Naive thymus-derived CD4-positive, alpha-beta T cell (primary cell): ENCODE measurements at regions of chr10 and their contacts with region 1.

Region 1: GRCh38 chr10:43420369-43421200 is 11.6 kb upstream of the HNRNPF start:
- DNase-seq: peak; percentile 69 to 86 (median 81)
- ATAC-seq: peak; percentile 94
- H3K4me3 ChIP-seq: peak overlapping the region; percentile 62
- H3K4me3 Mint-ChIP-seq: peak overlapping the region; percentile 87 to 98 (median 92)
- H3K27ac ChIP-seq: peak overlapping the region; percentile 95
- H3K27ac Mint-ChIP-seq: peak overlapping the region; percentile 91 to 99 (median 98)
- H3K4me1 ChIP-seq: peaks cover 24 to 29% of the 10 kb centered on the region in 2 donors
- H3K4me1 Mint-ChIP-seq: peaks cover 17 to 46% (median 41%) of the 10 kb centered on the region in 7 donors
- H3K27me3 ChIP-seq: no peaks in the 10 kb centered on the region
- H3K27me3 Mint-ChIP-seq: no peaks in the 10 kb centered on the region

Region 2: DNA sequence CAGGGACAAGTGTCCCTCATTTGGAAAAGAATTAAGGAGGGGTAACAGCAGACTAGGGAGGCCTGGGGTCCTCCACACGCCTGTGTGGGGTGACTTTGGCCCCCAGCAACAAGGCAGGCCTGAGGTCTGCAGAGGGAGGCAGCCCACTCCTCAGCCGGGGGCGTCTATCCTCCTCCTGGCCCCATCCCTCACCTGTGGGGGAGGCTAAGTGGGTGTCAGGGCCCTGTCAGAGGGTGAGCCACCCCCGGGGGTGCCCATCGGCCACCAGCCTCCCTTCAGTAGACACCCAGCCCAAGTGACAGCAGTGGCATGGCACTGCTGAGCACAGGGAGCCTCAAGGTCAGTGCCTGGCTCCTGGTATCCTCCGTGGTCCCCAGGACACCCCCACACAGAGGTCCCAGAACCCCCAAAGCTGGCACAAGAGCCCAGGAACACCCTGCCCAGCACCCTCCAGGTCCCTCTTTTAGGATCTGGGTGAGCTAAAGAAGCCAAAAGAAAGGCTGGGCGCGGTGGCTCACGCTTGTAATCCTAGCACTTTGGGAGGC is 49.8 kb before region 1 on chr10:
- CTCF ChIA-PET with region 1: no interaction called
- POLR2A ChIA-PET with region 1: no interaction called
- intact Hi-C with region 1: no loop called
- DNase-seq: no peak
- ATAC-seq: no peak
- H3K4me3 ChIP-seq: no peak overlapping the region
- H3K4me3 Mint-ChIP-seq: no peak overlapping the region
- H3K27ac ChIP-seq: no peak overlapping the region
- H3K27ac Mint-ChIP-seq: no peak overlapping the region
- H3K4me1 ChIP-seq: no peaks in the 10 kb centered on the region
- H3K4me1 Mint-ChIP-seq: peaks cover 0 to 11% (median 0%) of the 10 kb centered on the region in 7 donors
- H3K27me3 ChIP-seq: no peaks in the 10 kb centered on the region
- H3K27me3 Mint-ChIP-seq: no peaks in the 10 kb centered on the region

Region 3: GRCh38 chr10:43436400-43437140 is 16.0 kb after region 1 on chr10 and contains the start of gene ZNF487:
- CTCF ChIA-PET with region 1: interaction called, 3 read pairs
- POLR2A ChIA-PET with region 1: interaction called, 18 read pairs
- intact Hi-C with region 1: loop called (anchors 1 kb)
- DNase-seq: peak; percentile 87 to 94 (median 92)
- ATAC-seq: peak; percentile 94
- H3K4me3 ChIP-seq: peak within 1 kb of the TSS; percentile 97
- H3K4me3 Mint-ChIP-seq: peak within 1 kb of the TSS; percentile 93 to 99 (median 97)
- H3K27ac ChIP-seq: peak within 1 kb of the TSS; percentile 96
- H3K27ac Mint-ChIP-seq: peak within 1 kb of the TSS; percentile 93 to 100 (median 99)
- H3K4me1 ChIP-seq: peaks cover 5% of the 10 kb centered on the region in 2 donors
- H3K4me1 Mint-ChIP-seq: peaks cover 13 to 39% (median 27%) of the 10 kb centered on the region in 7 donors
- H3K27me3 ChIP-seq: no peaks in the 10 kb centered on the region
- H3K27me3 Mint-ChIP-seq: no peaks in the 10 kb centered on the region
- total RNA-seq, gene ZNF487: 4.1 to 12.0 (median 5.9) TPM

Region 4: DNA sequence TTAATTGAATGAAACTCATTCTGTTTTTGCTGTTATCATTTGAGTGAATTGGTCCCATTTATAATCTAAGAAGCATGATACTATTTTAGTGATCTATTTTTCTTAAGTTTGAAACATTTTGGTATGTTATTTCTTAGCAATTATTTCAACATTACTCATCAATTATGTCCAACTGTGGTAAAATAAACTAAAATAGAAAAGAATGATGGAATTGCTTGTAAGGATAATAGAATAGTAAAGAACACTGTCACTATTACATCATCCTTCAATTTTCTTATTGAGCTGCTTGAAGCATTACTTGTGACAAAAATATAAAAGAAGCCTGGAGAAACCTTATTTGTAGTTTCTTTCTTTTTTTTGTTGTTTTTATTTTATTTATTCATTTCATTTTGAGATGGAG is 58.7 kb after region 1 on chr10:
- CTCF ChIA-PET with region 1: no interaction called
- POLR2A ChIA-PET with region 1: no interaction called
- intact Hi-C with region 1: no loop called
- DNase-seq: no peak
- ATAC-seq: no peak
- H3K4me3 ChIP-seq: no peak overlapping the region
- H3K4me3 Mint-ChIP-seq: no peak overlapping the region
- H3K27ac ChIP-seq: no peak overlapping the region
- H3K27ac Mint-ChIP-seq: no peak overlapping the region
- H3K4me1 ChIP-seq: no peaks in the 10 kb centered on the region
- H3K4me1 Mint-ChIP-seq: peaks cover 0 to 1% (median 0%) of the 10 kb centered on the region in 7 donors
- H3K27me3 ChIP-seq: no peaks in the 10 kb centered on the region
- H3K27me3 Mint-ChIP-seq: no peaks in the 10 kb centered on the region